GM13977 (cell line): ENCODE measurements at regions of chr1 and their contacts with region 1.

Region 1: DNA sequence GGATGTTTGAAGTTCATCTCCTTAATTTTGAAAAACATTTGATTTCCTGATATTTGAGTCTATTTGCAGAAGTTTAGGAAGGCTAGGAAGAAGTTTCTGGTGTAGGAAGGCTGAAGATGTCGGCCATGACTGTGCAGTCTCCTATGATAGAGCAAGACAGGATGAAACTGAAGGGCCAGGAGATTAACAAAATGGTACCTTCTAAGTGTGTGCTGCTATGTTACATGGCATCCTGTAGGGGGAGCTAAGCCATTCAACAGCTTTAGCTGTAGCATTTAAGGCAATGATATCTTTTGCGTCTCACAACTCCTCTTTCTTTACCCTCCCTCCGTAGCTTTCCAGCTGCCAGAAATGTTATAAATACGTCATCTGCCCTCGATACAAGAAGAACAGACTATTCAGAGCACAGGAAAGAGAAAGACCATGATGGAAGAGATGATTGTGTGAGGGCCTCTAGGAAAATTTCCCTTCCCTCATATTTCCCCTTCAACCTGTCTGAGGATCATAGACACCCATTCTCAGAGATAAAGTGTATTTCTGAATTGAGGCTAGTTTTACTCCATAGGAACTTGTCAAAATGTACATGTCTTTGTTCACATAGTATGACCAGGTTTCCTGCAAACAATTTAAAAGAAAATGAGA is 61.1 kb downstream of the XCL1 start:
- DNase-seq: peak; percentile 25
- CTCF ChIP-seq: peak; percentile 79

Region 2: GRCh38 chr1:169106095-169106920 is 468.8 kb after region 1 on chr1 and contains the start of gene ATP1B1:
- in situ Hi-C with region 1: loop called (anchors 25 kb)
- DNase-seq: peak; percentile 97
- CTCF ChIP-seq: peak; percentile 27